HCT116 (cell line): ENCODE measurements at regions of chrX and their contacts with region 1.

Region 1: GRCh38 chrX:15471016-15471415 is 22.1 kb downstream of the PIR start:
- DNase-seq: peak; percentile 27
- ATAC-seq: peak; percentile 86
- H3K4me3 ChIP-seq: no peak overlapping the region
- H3K27ac ChIP-seq: no peak overlapping the region
- H3K4me1 ChIP-seq: peaks cover 0 to 12% of the 10 kb centered on the region in 2 experiments; a peak in 1 of 4 replicates
- H3K27me3 ChIP-seq: no peaks in the 10 kb centered on the region
- CTCF ChIP-seq: peak; percentile 46 to 71 (median 71); a peak in 5 of 6 replicates
- POLR2A ChIP-seq: no peak
- RAD21 ChIP-seq: peak; percentile 72

Region 2: DNA sequence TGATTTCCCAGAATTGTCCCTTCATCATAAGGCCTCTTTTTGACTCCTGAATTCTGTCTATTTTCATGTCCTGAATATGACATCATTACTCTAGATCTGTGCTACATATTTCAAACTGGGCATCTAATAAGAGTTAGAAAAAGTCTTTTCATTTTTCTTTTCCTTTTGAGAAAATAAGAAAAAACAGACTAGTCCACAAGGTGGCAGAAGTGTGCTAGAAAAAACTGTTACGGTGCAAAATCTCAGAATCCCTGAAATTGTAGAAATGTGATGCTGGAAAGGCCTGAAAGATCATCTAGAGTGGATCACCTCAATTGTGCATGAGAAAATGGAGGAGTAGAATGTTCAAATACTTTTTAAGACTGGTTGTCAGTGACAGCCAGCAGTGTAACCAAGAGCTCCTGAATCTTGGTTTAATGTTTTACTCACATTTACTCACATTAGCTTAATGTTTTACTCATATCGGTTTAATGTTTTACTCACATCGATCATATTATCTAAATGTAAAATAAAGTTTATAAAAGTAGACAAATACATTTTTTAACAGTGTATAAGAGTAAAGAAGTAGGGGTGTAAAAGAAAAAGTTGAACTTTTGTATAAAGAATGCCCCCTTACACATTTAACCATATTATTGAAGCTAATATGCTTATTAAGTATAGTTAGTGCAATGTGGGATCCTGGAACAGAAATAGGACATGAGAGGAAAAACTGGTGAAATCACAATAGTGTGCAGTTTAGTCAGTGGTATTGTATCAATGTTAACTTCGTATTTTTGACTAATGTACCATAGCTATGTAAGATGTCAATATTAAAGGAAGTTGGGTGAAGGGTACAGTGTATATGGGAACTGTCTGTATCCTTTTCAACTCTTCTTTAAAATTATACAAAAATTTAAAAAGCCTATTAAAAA is 170.8 kb before region 1 on chrX:
- CTCF ChIA-PET with region 1: no interaction called
- POLR2A ChIA-PET with region 1: no interaction called
- RAD21 ChIA-PET with region 1: no interaction called
- intact Hi-C with region 1: loop called (anchors 5 kb)
- DNase-seq: no peak
- ATAC-seq: no peak
- H3K4me3 ChIP-seq: no peak overlapping the region
- H3K27ac ChIP-seq: no peak overlapping the region
- H3K4me1 ChIP-seq: no peaks in the 10 kb centered on the region
- H3K27me3 ChIP-seq: no peaks in the 10 kb centered on the region
- CTCF ChIP-seq: peak in 2 of 3 experiments; percentile 34 to 51; a peak in 2 of 6 replicates
- POLR2A ChIP-seq: no peak
- RAD21 ChIP-seq: peak; percentile 42; the same call in 1 of the 2 replicates

Region 3: DNA sequence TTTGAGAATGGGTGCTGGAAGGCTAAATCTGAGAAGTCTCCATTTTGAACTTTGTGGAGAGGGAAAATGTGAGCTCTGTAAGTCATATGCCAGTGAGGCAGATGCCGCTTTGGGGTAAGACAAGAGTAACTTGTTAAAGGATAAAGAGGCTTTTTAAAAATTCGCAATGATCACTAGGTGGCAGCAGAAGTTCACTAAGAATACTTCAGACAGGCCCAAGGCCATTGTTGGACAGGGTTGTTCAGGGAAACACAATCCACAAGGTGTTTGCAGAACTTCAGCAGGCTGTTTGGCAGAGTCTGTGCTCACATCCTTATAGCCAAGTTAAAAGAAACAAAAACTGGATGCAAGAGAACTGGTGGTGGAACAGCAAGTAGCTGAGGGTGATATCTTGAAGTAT is 122.0 kb before region 1 on chrX:
- CTCF ChIA-PET with region 1: interaction called, 3 read pairs
- POLR2A ChIA-PET with region 1: no interaction called
- RAD21 ChIA-PET with region 1: no interaction called
- intact Hi-C with region 1: loop called (anchors 1 kb)
- DNase-seq: peak; percentile 39
- ATAC-seq: peak; percentile 81
- H3K4me3 ChIP-seq: no peak overlapping the region
- H3K27ac ChIP-seq: no peak overlapping the region
- H3K4me1 ChIP-seq: no peaks in the 10 kb centered on the region
- H3K27me3 ChIP-seq: no peaks in the 10 kb centered on the region
- CTCF ChIP-seq: peak; percentile 18 to 41 (median 34); a peak in 4 of 6 replicates
- POLR2A ChIP-seq: no peak
- RAD21 ChIP-seq: peak; percentile 71

Region 4: DNA sequence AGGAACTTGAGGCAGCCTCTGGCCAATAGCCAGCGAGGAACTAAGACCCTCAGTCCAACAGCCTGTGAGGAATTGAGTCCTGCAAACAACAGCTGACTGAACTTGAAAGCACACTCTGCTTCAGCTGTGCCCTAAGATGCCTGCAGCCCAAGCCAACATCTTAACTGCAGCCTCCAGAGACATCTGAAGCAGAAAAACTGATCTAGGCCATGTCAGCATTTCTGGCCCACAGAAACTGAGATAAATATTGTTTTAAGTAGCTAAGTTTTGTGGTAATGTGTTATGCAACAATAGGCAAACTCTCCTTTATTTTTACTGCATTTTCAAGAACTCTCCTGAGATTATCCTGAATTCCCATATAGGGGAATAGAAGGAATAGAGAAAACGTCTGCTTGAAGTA is 111.3 kb before region 1 on chrX:
- CTCF ChIA-PET with region 1: no interaction called
- POLR2A ChIA-PET with region 1: no interaction called
- RAD21 ChIA-PET with region 1: no interaction called
- intact Hi-C with region 1: loop called (anchors 5 kb)
- DNase-seq: no peak
- ATAC-seq: no peak
- H3K4me3 ChIP-seq: no peak overlapping the region
- H3K27ac ChIP-seq: no peak overlapping the region
- H3K4me1 ChIP-seq: no peaks in the 10 kb centered on the region
- H3K27me3 ChIP-seq: no peaks in the 10 kb centered on the region
- CTCF ChIP-seq: no peak
- POLR2A ChIP-seq: no peak
- RAD21 ChIP-seq: no peak

Region 5: GRCh38 chrX:15549189-15550012 is 78.4 kb after region 1 on chrX:
- CTCF ChIA-PET with region 1: no interaction called
- POLR2A ChIA-PET with region 1: no interaction called
- RAD21 ChIA-PET with region 1: no interaction called
- intact Hi-C with region 1: no loop called
- DNase-seq: no peak
- ATAC-seq: no peak
- H3K4me3 ChIP-seq: no peak overlapping the region
- H3K27ac ChIP-seq: no peak overlapping the region
- H3K4me1 ChIP-seq: no peaks in the 10 kb centered on the region
- H3K27me3 ChIP-seq: no peaks in the 10 kb centered on the region
- CTCF ChIP-seq: no peak
- POLR2A ChIP-seq: no peak
- RAD21 ChIP-seq: no peak

Region 6: DNA sequence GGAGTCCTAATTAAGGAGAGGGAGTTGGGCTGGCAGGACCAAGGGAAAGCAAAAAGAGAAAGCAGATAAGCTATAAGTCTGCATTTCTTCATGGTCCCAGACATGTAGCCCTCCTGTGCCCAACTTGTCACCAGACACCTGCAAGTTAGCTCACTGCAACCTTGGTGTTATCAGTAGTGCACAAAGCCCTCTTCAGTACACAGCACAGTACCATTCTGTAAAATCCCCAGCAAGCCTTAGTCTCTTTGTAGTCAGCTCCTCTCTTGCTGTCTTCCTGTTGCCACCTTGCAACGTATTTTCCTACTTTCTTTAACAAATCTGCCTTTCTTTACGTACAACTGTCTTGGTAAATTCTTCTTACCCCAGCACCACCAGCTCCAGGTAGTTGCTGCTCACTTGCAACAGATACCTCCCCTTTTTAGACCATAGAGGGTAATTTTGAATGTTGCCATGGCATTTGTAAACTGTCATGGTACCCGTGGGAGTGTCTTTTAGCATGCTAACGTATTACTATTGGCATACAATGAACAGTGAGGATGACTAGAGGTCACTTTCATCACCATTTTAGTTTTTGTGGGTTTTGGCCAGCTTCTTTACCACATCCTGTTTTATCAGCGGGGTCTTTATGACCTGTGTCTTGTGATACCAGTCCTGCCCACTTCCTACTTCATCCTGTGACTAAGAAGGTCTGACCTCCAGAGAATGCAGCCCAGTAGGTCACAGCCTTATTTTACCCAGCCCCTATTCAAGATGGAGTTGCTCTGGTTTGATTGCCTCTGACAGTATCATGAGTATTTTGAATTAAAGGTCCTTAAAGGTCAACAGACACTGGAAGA is 411.9 kb after region 1 on chrX:
- CTCF ChIA-PET with region 1: no interaction called
- POLR2A ChIA-PET with region 1: no interaction called
- RAD21 ChIA-PET with region 1: no interaction called
- intact Hi-C with region 1: no loop called
- DNase-seq: no peak
- ATAC-seq: no peak
- H3K4me3 ChIP-seq: no peak overlapping the region
- H3K27ac ChIP-seq: no peak overlapping the region
- H3K4me1 ChIP-seq: no peaks in the 10 kb centered on the region; a peak in 1 of 4 replicates
- H3K27me3 ChIP-seq: no peaks in the 10 kb centered on the region
- CTCF ChIP-seq: no peak
- POLR2A ChIP-seq: no peak
- RAD21 ChIP-seq: no peak